ENCODE measurements at regions of chr4 and their contacts with region 1.

Region 1: DNA sequence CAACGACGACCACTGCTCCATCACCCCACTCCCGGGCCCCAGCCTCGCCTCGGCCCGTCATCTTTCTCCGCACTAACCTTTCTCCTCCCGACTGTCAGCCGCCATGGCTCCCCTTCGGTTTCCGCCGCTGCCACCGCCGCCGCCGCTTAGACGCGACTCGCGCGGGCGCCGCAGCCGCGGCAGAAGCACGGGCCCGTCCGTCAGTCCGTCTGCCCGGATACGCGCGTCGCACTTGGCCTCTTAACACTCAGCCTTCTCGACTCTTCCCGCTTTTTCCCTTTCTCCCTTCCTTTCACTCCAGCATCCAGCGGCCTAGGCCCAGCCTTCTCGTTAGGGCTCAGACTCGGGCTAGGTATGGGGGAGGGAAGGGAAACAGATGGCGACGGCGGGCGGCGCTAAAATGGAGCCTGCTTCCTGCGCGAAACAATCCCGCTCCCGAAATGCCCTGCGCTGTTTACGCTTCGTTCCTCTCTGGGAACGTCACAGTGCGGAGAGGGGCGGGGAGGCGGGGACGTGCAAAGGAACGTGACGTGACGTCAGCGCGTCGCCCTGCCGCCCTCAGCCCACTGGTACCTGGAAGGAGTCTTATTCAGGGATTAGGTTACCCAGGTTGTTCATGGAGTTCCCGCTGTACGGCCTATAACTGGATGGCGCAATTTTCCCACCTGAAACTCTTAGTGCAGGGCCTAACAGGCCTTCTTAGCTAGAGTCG is at the start of gene YTHDC1:
- DNase-seq: peak; percentile 99
- ATAC-seq: peak; percentile 87
- H3K4me3 ChIP-seq: peak within 1 kb of the TSS; percentile 93
- H3K27ac ChIP-seq: peak within 1 kb of the TSS; percentile 78
- H3K4me1 ChIP-seq: peaks cover 33% of the 10 kb centered on the region
- H3K27me3 ChIP-seq: no peaks in the 10 kb centered on the region
- CTCF ChIP-seq: 0 out of 2 replicates have a peak, but pooled peaks have one; percentile 9
- total RNA-seq, gene YTHDC1: 47.6 and 55.5 TPM in 2 replicates

Region 2: DNA sequence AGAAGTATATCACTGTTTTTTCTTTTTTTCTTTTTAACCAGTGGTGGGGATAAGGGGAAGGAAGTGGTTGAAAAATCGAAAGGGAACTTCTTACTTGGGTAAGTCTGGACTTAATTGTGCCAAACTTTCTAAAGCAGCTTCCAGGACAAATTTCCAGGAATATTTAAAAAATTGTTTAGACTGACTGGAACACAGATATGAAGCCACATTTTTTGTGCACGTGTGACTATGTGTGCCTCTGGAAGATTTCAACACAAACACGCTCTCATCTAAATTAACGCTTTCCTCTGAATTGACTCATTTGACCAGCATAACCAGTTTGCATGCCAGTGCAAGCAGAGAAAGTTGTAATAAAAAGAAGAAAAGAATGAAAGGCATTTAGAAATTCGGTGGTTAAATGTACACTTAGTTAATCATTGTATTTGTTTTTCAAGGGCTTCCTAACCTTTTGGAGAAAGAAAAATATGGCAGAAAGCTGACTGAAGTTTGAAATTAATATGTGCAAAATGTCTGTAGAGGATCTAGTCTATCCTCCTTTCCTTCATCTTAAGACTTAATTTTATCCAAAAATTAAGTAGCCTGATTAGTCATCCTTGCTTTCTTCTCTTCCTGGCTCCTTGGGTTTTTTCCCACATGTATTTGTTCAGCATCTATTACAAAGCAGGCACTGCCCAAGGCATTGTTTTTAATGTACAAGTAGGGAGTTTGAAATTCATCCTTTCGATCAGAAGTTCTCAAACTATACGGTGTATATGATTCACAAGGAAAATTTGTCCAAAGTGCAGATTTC is 19.1 kb after region 1 on chr4:
- CTCF ChIA-PET with region 1: no interaction called
- POLR2A ChIA-PET with region 1: interaction called, 4 read pairs
- intact Hi-C with region 1: loop called (anchors 1 kb)
- DNase-seq: peak; percentile 95
- ATAC-seq: peak; percentile 74
- H3K4me3 ChIP-seq: peak overlapping the region; percentile 49
- H3K27ac ChIP-seq: peak overlapping the region; percentile 74
- H3K4me1 ChIP-seq: peaks cover 41% of the 10 kb centered on the region
- H3K27me3 ChIP-seq: no peaks in the 10 kb centered on the region
- CTCF ChIP-seq: no peak